GM10248 (cell line): ENCODE measurements at regions of chr1 and their contacts with region 1.

Region 1: GRCh38 chr1:174097426-174097825 is 61.9 kb upstream of the RABGAP1L start:
- DNase-seq: no peak
- CTCF ChIP-seq: no peak

Region 2: DNA sequence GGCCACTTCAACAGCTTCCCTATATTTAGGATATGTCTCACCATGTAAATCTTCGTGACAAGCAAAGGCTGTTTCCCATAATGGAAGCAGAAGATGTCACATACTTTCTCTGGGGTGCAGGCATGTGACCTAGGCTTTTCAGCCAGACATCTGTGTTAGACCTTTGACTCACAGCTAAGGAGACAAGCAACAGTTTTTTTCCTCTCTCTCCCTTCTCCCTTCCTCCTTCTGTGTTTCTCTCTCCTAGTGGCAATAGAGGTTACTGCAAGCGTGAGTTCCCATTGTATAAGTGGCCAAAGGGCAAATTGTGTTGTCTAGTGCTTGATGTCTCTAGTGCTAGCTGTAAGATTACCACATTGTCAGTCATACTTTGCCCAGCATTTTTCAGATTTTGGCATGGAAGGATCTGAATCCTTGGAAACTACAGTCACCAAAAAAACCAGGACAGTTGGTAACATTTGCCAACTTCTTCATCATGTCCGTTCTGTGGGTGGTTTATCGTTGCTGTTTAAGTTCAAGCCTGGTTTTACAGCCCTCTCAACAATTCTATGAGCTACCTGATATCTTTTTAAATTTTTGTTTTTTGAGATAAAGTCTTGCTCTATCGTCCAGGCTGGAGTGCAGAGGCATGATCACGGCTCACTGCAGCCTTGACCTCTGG is 17.5 kb after region 1 on chr1:
- CTCF ChIA-PET with region 1: interaction called, 12 read pairs
- POLR2A ChIA-PET with region 1: no interaction called
- DNase-seq: peak; percentile 27
- CTCF ChIP-seq: peak; percentile 61